Body of pancreas (tissue), 4 donors: ENCODE measurements at regions of chr12 and their contacts with region 1.

Region 1: DNA sequence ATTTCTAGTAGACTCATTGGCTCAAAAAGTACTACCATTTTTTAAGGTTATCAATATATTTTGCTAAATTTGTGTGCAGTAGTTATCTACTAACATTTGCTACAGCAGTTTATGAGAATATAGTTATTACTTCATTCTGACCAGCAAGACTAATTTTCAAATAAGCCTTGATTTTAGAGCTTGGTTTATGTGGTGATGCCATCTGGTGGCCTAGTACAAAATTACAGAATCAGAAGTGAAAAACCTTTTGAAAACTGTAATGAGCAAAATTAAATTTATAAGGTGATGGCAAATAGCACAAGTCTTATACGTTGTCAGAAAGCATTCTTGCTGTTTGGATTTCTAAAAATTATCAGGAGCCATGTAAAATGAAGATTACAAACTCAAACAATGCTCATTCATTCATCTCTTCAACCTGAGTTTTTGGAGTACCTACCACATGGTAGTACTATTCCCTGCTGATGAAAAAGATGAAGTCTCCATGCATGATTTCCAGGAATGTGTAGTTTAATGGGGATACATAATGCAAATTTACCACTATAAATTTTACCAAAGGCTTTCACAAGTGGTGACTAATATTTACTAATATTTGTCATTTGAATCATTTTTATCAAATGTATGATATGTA is 51.0 kb downstream of the MAGOHB start:
- DNase-seq: peak in 1 of 4 donors; percentile 24
- ATAC-seq: no peak
- H3K4me3 ChIP-seq: no peak overlapping the region
- H3K27ac ChIP-seq: no peak overlapping the region
- H3K4me1 ChIP-seq: no peaks in the 10 kb centered on the region
- H3K27me3 ChIP-seq: no peaks in the 10 kb centered on the region
- CTCF ChIP-seq: peak; percentile 15 to 80 (median 71)
- POLR2A ChIP-seq: no peak

Region 2: GRCh38 chr12:9760699-9761418 is 801.6 kb before region 1 on chr12 and contains the start of gene CD69:
- intact Hi-C with region 1: no loop called
- DNase-seq: peak in 1 of 4 donors; percentile 54
- ATAC-seq: no peak
- H3K4me3 ChIP-seq: no peak within 1 kb of the TSS
- H3K27ac ChIP-seq: peak within 1 kb of the TSS in 1 of 4 donors; percentile 7
- H3K4me1 ChIP-seq: peaks cover 8% of the 10 kb centered on the region
- H3K27me3 ChIP-seq: no peaks in the 10 kb centered on the region
- CTCF ChIP-seq: no peak
- POLR2A ChIP-seq: peak in 2 of 3 donors; percentile 43 to 59
- total RNA-seq, gene CD69: 3.1 to 4.0 TPM

Region 3: GRCh38 chr12:10220398-10221077 is 341.9 kb before region 1 on chr12:
- intact Hi-C with region 1: no loop called
- DNase-seq: peak; percentile 84 to 88 (median 86)
- ATAC-seq: peak; percentile 99
- H3K4me3 ChIP-seq: no peak overlapping the region
- H3K27ac ChIP-seq: peak overlapping the region; percentile 12 to 57 (median 48)
- H3K4me1 ChIP-seq: peaks cover 27% of the 10 kb centered on the region
- H3K27me3 ChIP-seq: no peaks in the 10 kb centered on the region
- CTCF ChIP-seq: no peak
- POLR2A ChIP-seq: no peak

Region 4: GRCh38 chr12:10235761-10236631 is 326.4 kb before region 1 on chr12:
- intact Hi-C with region 1: loop called (anchors 5 kb)
- DNase-seq: peak; percentile 28 to 49 (median 32)
- ATAC-seq: peak; percentile 60
- H3K4me3 ChIP-seq: no peak overlapping the region
- H3K27ac ChIP-seq: no peak overlapping the region
- H3K4me1 ChIP-seq: no peaks in the 10 kb centered on the region
- H3K27me3 ChIP-seq: no peaks in the 10 kb centered on the region
- CTCF ChIP-seq: peak; percentile 63 to 94 (median 77)
- POLR2A ChIP-seq: no peak

Region 5: DNA sequence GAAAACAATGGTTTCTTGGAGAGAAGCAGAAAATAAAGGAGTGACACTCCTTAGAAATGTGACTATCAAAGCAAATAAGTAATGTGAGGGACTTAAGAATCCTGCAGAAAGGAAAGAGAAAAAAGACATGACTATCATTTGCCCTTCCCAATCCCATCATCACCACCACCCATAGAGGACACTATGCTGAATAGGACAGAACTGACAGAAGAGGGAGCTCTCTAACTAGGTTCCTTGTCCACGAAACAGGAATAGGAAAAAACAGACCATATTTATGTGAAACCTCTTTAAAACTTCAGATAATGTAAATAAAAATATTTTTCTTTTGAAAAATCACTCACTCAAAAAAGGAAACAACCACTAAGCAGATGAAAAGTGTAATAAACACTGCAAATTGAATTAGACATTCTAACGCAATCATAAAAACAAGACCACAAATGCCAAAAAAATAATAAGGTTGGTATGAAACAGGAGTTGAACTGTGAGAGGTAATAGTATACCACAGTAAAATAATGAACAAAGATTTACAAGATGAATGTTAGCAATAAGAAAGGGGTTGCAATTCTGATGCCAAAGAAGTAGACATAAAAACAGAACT is 230.7 kb before region 1 on chr12:
- intact Hi-C with region 1: loop called (anchors 5 kb)
- DNase-seq: no peak
- ATAC-seq: peak; percentile 74
- H3K4me3 ChIP-seq: no peak overlapping the region
- H3K27ac ChIP-seq: no peak overlapping the region
- H3K4me1 ChIP-seq: no peaks in the 10 kb centered on the region
- H3K27me3 ChIP-seq: no peaks in the 10 kb centered on the region
- CTCF ChIP-seq: peak; percentile 27 to 84 (median 80)
- POLR2A ChIP-seq: no peak

Region 6: DNA sequence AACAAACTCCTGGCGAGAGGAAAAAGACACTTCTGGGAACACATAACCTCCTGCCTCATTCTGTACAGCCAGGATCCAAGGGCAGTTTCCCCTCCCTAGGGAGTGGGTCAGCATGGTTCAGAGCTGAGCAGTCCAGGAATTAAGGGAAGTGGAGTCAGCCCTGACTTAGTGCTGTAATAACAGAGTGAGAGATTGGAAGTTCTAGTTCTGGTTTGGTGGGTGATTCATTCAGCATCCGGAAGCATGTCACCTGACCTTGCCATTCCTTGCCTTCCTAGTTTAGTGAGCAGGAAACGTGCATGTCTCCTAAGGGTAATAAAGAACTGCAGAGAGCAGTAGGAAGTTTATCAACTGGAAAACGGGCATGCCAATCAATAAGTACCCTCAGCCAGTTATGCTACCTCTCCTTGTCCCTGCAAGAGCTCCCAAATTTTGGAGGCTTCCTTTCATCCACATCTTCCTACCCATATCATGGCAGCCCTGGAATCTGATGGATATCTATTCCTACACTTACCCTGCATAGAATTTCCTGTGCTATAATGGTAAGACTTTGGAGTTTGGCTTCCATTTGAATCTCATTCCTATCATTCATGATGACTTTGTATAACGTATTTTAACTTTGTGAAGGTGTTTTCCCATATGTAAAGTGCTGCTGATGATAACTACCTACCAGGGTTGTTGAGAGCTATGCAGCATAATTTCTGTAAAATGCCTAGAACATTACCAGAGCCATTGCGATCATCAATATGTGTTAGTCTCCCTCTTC is 79.5 kb after region 1 on chr12:
- intact Hi-C with region 1: no loop called
- DNase-seq: no peak
- ATAC-seq: no peak
- H3K4me3 ChIP-seq: no peak overlapping the region
- H3K27ac ChIP-seq: no peak overlapping the region
- H3K4me1 ChIP-seq: no peaks in the 10 kb centered on the region
- H3K27me3 ChIP-seq: no peaks in the 10 kb centered on the region
- CTCF ChIP-seq: no peak
- POLR2A ChIP-seq: no peak

Region 7: GRCh38 chr12:11500178-11500860 is 937.9 kb after region 1 on chr12:
- intact Hi-C with region 1: no loop called
- DNase-seq: peak; percentile 82 to 90 (median 84)
- ATAC-seq: peak; percentile 86
- H3K4me3 ChIP-seq: no peak overlapping the region
- H3K27ac ChIP-seq: no peak overlapping the region
- H3K4me1 ChIP-seq: peaks cover 11% of the 10 kb centered on the region
- H3K27me3 ChIP-seq: no peaks in the 10 kb centered on the region
- CTCF ChIP-seq: no peak
- POLR2A ChIP-seq: no peak